ENCODE measurements at regions of chr20 and their contacts with region 1.

Region 1: GRCh38 chr20:36273414-36274180 is 32.5 kb upstream of the DLGAP4 start:
- DNase-seq: no peak
- ATAC-seq: peak in 1 of 2 donors; percentile 18
- H3K4me3 ChIP-seq: no peak overlapping the region
- H3K27ac ChIP-seq: no peak overlapping the region
- H3K4me1 ChIP-seq: no peaks in the 10 kb centered on the region
- H3K27me3 ChIP-seq: no peaks in the 10 kb centered on the region

Region 2: GRCh38 chr20:36421641-36422040 is 148.0 kb after region 1 on chr20:
- intact Hi-C with region 1: loop called in 1 of 4 experiments (anchors 10 kb)
- DNase-seq: no peak
- ATAC-seq: no peak
- H3K4me3 ChIP-seq: no peak overlapping the region
- H3K27ac ChIP-seq: no peak overlapping the region
- H3K4me1 ChIP-seq: no peaks in the 10 kb centered on the region
- H3K27me3 ChIP-seq: no peaks in the 10 kb centered on the region

Measured in right cardiac atrium (tissue), 5 donors.